AG04450 (cell line): ENCODE measurements at regions of chr1 and their contacts with region 1.

Region 1: GRCh38 chr1:156123356-156124196 is 9.1 kb downstream of the LMNA start:
- DNase-seq: peak; percentile 95
- H3K4me3 ChIP-seq: peak overlapping the region; percentile 52
- H3K27ac ChIP-seq: peak overlapping the region; percentile 99
- H3K27me3 ChIP-seq: no peaks in the 10 kb centered on the region
- CTCF ChIP-seq: peak; percentile 43

Region 2: GRCh38 chr1:155929057-155929456 is 194.5 kb before region 1 on chr1:
- CTCF ChIA-PET with region 1: no interaction called
- POLR2A ChIA-PET with region 1: no interaction called
- DNase-seq: no peak
- H3K4me3 ChIP-seq: no peak overlapping the region
- H3K27ac ChIP-seq: no peak overlapping the region
- H3K27me3 ChIP-seq: no peaks in the 10 kb centered on the region
- CTCF ChIP-seq: no peak

Region 3: GRCh38 chr1:156104065-156104810 is 19.3 kb before region 1 on chr1:
- CTCF ChIA-PET with region 1: interaction called, 682 read pairs
- POLR2A ChIA-PET with region 1: interaction called, 36 read pairs
- DNase-seq: no peak
- H3K4me3 ChIP-seq: peak overlapping the region; percentile 7; the same call in 1 of the 2 replicates
- H3K27ac ChIP-seq: peak overlapping the region; percentile 61
- H3K27me3 ChIP-seq: no peaks in the 10 kb centered on the region
- CTCF ChIP-seq: no peak

Region 4: GRCh38 chr1:156135821-156136477 is 12.4 kb after region 1 on chr1:
- CTCF ChIA-PET with region 1: no interaction called
- POLR2A ChIA-PET with region 1: no interaction called
- DNase-seq: no peak
- H3K4me3 ChIP-seq: no peak overlapping the region
- H3K27ac ChIP-seq: no peak overlapping the region
- H3K27me3 ChIP-seq: no peaks in the 10 kb centered on the region
- CTCF ChIP-seq: no peak

Region 5: GRCh38 chr1:156238248-156238647 is 114.7 kb after region 1 on chr1:
- CTCF ChIA-PET with region 1: no interaction called
- POLR2A ChIA-PET with region 1: no interaction called
- DNase-seq: no peak
- H3K4me3 ChIP-seq: no peak overlapping the region
- H3K27ac ChIP-seq: no peak overlapping the region
- H3K27me3 ChIP-seq: no peaks in the 10 kb centered on the region
- CTCF ChIP-seq: no peak